Heart right ventricle (tissue), 16 donors: ENCODE measurements at regions of chr12 and their contacts with region 1.

Region 1: GRCh38 chr12:55908726-55909512 is 18.8 kb downstream of the PYM1 start:
- DNase-seq: no peak
- ATAC-seq: peak in 1 of 8 donors; percentile 27
- H3K4me3 ChIP-seq: no peak overlapping the region
- H3K27ac ChIP-seq: peak overlapping the region in 4 of 10 donors; percentile 3 to 68 (median 8)
- H3K4me1 ChIP-seq: peaks cover 0 to 27% (median 6%) of the 10 kb centered on the region in 9 donors
- H3K27me3 ChIP-seq: no peaks in the 10 kb centered on the region
- CTCF ChIP-seq: no peak

Region 2: GRCh38 chr12:55829967-55830600 is 78.8 kb before region 1 on chr12:
- intact Hi-C with region 1: loop called in 1 of 10 experiments (anchors 5 kb)
- DNase-seq: peak; percentile 44 to 62
- ATAC-seq: peak; percentile 28 to 65 (median 34)
- H3K4me3 ChIP-seq: peak overlapping the region; percentile 63 to 98 (median 85)
- H3K27ac ChIP-seq: peak overlapping the region; percentile 85 to 96 (median 92)
- H3K4me1 ChIP-seq: peaks cover 10 to 57% (median 50%) of the 10 kb centered on the region in 9 donors
- H3K27me3 ChIP-seq: no peaks in the 10 kb centered on the region
- CTCF ChIP-seq: no peak

Region 3: DNA sequence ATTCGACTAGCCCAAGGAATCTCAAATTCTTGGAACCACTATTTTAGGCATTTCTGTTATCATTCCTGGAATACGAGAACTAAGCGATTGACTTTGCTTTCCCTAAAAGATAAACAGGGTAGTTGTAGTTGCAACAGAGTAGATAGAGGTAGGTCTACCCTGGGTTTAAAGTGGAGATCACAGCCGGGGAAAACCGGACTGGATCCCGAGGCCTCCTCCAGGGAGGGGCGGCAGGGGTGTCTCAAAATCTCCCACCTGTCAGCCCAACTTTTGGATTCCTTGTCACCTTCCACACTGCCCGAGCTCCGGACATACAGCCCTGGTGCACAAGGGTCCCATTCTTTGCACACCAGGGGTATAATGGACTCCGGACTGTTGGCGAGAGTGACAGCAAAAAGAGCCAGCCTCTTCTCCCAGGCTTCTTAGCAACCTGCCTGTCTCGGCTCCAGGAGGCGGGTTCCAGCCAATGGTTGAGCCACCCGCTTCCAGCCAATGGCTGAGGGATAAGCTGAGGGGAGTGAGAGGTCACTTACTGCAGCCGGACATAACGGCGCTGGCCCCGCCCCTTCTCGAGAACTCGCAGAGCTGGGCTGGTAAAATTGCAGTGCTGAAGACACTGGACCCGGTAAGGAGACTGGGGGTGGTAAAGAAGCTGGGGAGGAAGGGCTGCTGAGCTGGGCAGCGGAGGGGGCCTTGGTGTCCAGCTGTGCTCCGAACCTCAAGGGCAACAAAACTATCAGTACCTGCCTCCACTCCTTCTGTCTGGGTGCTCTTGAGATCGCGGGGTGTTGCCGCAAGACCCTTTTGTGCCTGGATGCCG is 88.0 kb after region 1 on chr12 and contains the start of gene SUOX:
- intact Hi-C with region 1: no loop called
- DNase-seq: peak; percentile 94 to 97
- ATAC-seq: peak; percentile 98 to 100 (median 99)
- H3K4me3 ChIP-seq: peak within 1 kb of the TSS; percentile 19 to 79 (median 66)
- H3K27ac ChIP-seq: peak within 1 kb of the TSS in 9 of 10 donors; percentile 62 to 93 (median 83)
- H3K4me1 ChIP-seq: peaks cover 5 to 22% (median 11%) of the 10 kb centered on the region in 9 donors
- H3K27me3 ChIP-seq: no peaks in the 10 kb centered on the region
- CTCF ChIP-seq: no peak
- total RNA-seq, gene SUOX: 28.2 to 44.8 (median 31.4) TPM